ENCODE measurements at regions of chr1 and their contacts with region 1.

Region 1: GRCh38 chr1:204363335-204364124 is 3.8 kb upstream of the PLEKHA6 start:
- DNase-seq: peak; percentile 44 to 70
- ATAC-seq: peak; percentile 54 to 70; a peak in 4 of 6 replicates
- H3K4me3 ChIP-seq: no peak overlapping the region
- H3K27ac ChIP-seq: peak overlapping the region; percentile 48 to 71; a peak in 4 of 6 replicates
- H3K4me1 ChIP-seq: peaks cover 31% of the 10 kb centered on the region
- CTCF ChIP-seq: peak; percentile 98
- EP300 ChIP-seq: no peak
- POLR2A ChIP-seq: no peak
- RAD21 ChIP-seq: peak; percentile 98

Region 2: GRCh38 chr1:204198151-204198994 is 165.2 kb before region 1 on chr1:
- CTCF ChIA-PET with region 1: interaction called, 11 read pairs
- POLR2A ChIA-PET with region 1: no interaction called
- DNase-seq: peak; percentile 44 to 49
- ATAC-seq: peak; percentile 57 to 59
- H3K4me3 ChIP-seq: no peak overlapping the region
- H3K27ac ChIP-seq: 0 out of 6 replicates have a peak overlapping the region, but pooled peaks of 1 of the 2 experiments have one; percentile 18
- H3K4me1 ChIP-seq: peaks cover 5% of the 10 kb centered on the region; the same call in 2 of the 3 replicates
- CTCF ChIP-seq: peak; percentile 12; the same call in 1 of the 3 replicates
- EP300 ChIP-seq: no peak
- POLR2A ChIP-seq: no peak
- RAD21 ChIP-seq: peak; percentile 16 to 34; a peak in 3 of 5 replicates

Region 3: GRCh38 chr1:204232526-204232925 is 131.0 kb before region 1 on chr1:
- CTCF ChIA-PET with region 1: interaction called, 22 read pairs
- POLR2A ChIA-PET with region 1: no interaction called
- DNase-seq: no peak
- ATAC-seq: no peak
- H3K4me3 ChIP-seq: no peak overlapping the region
- H3K27ac ChIP-seq: no peak overlapping the region
- H3K4me1 ChIP-seq: no peaks in the 10 kb centered on the region
- CTCF ChIP-seq: no peak
- EP300 ChIP-seq: no peak
- POLR2A ChIP-seq: no peak
- RAD21 ChIP-seq: no peak

Region 4: GRCh38 chr1:204307334-204307883 is 56.1 kb before region 1 on chr1:
- CTCF ChIA-PET with region 1: interaction called, 19 read pairs
- POLR2A ChIA-PET with region 1: no interaction called
- DNase-seq: no peak
- ATAC-seq: peak in 1 of 2 experiments; percentile 37; a peak in 3 of 6 replicates
- H3K4me3 ChIP-seq: no peak overlapping the region
- H3K27ac ChIP-seq: peak overlapping the region in 1 of 2 experiments; percentile 21; a peak in 1 of 6 replicates
- H3K4me1 ChIP-seq: peaks cover 8% of the 10 kb centered on the region; the same call in 2 of the 3 replicates
- CTCF ChIP-seq: no peak
- EP300 ChIP-seq: no peak
- POLR2A ChIP-seq: no peak
- RAD21 ChIP-seq: no peak

Region 5: DNA sequence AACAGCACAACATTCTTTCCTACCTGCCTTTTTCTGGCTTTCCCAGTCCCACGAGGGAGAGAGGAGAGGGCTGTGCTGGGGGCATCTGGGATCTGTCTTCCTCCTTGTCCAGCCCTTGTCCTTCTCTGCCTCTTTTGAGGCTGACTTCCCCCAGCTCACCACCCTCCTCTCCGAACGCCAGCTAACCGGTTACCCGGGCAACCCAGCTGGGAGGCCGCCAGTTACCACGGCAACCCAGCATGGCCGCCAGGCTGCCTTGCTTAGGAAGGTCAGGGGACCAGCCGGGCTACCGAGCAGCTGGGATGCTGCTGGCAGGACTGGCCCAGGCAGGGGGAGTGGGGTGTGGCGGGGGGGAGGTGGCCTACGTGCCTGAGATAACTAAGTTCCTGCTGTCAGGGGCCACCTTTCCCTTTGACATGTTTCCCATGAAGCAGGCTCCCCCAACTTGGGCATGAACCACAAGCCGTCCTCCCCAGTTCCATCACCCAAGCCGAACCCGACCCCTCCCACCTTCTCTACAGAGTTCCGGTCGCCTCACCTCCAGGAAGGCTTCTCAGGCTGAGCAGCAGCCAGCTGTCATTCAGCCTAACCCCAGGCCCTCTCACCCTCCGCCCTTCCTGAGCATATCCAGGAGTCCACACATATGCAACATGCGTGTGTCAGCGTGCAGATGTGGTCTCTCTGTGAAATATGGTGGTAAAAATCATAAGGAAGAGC is 12.5 kb before region 1 on chr1:
- CTCF ChIA-PET with region 1: interaction called, 86 read pairs
- POLR2A ChIA-PET with region 1: no interaction called
- DNase-seq: no peak
- ATAC-seq: no peak; a peak in 2 of 6 replicates
- H3K4me3 ChIP-seq: no peak overlapping the region
- H3K27ac ChIP-seq: peak overlapping the region in 1 of 2 experiments; percentile 12; a peak in 1 of 6 replicates
- H3K4me1 ChIP-seq: peaks cover 40% of the 10 kb centered on the region
- CTCF ChIP-seq: no peak
- EP300 ChIP-seq: no peak
- POLR2A ChIP-seq: no peak
- RAD21 ChIP-seq: no peak